ENCODE measurements at regions of chr12 and their contacts with region 1.

Region 1: DNA sequence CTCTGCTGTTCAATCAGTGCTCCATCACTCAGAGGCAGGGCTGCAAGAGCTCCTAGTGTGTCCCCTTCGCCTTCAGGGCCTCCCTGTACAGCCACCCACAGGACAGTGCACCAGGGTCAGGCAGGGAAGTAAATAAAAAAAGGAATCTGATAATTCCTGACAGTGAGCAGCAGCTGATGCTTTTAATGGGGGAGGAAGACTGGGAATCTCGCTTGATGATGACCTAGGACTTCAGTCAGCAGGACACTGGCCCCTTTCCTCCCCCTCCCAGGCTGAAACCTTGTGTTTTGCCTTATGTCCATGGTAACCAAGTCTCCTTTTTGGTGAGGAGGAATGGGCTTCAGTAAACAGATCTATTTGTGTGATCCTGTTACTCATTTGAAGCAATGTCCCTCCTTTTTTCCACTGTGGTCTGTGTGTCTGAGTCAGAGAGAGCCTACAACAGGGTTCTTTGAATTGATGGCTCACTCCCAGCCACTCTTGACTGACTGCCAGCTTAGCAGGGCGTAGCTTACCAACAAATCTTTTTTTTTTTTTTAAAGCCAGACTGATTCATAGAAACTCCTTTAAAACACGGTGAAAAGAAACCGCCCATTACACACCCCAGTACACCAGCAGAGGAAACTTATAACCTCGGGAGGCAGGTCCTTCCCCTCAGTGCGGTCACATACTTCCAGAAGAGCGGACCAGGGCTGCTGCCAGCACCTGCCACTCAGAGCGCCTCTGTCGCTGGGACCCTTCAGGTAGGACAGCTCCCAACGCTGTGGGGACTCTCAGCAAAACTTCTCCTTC is at the start of gene EMP1:
- DNase-seq: peak; percentile 89
- ATAC-seq: peak; percentile 97
- H3K4me3 Mint-ChIP-seq: peak within 1 kb of the TSS; percentile 82
- H3K27ac Mint-ChIP-seq: peak within 1 kb of the TSS; percentile 83
- H3K4me1 Mint-ChIP-seq: peaks cover 32% of the 10 kb centered on the region
- H3K27me3 Mint-ChIP-seq: no peaks in the 10 kb centered on the region
- total RNA-seq, gene EMP1: 12.9 to 16.6 TPM

Region 2: GRCh38 chr12:12356886-12357718 is 839.2 kb before region 1 on chr12 and contains the start of gene BORCS5:
- CTCF ChIA-PET with region 1: no interaction called
- POLR2A ChIA-PET with region 1: no interaction called
- intact Hi-C with region 1: loop called in 1 of 2 experiments (anchors 10 kb)
- DNase-seq: peak; percentile 99
- ATAC-seq: peak; percentile 94
- H3K4me3 Mint-ChIP-seq: peak within 1 kb of the TSS; percentile 98
- H3K27ac Mint-ChIP-seq: peak within 1 kb of the TSS; percentile 99
- H3K4me1 Mint-ChIP-seq: peaks cover 38% of the 10 kb centered on the region
- H3K27me3 Mint-ChIP-seq: no peaks in the 10 kb centered on the region
- total RNA-seq, gene BORCS5: 41.8 to 45.0 TPM

Region 3: GRCh38 chr12:12786716-12787601 is 409.4 kb before region 1 on chr12:
- CTCF ChIA-PET with region 1: no interaction called
- POLR2A ChIA-PET with region 1: no interaction called
- intact Hi-C with region 1: no loop called
- DNase-seq: peak; percentile 84
- ATAC-seq: peak; percentile 89
- H3K4me3 Mint-ChIP-seq: peak overlapping the region; percentile 81
- H3K27ac Mint-ChIP-seq: peak overlapping the region; percentile 90
- H3K4me1 Mint-ChIP-seq: peaks cover 28% of the 10 kb centered on the region
- H3K27me3 Mint-ChIP-seq: no peaks in the 10 kb centered on the region

Region 4: GRCh38 chr12:13044002-13044905 is 152.1 kb before region 1 on chr12 and contains the start of gene FAM234B:
- CTCF ChIA-PET with region 1: interaction called, 3 read pairs
- POLR2A ChIA-PET with region 1: interaction called, 7 read pairs
- intact Hi-C with region 1: loop called in 1 of 2 experiments (anchors 1 kb)
- DNase-seq: peak; percentile 85
- ATAC-seq: peak; percentile 88
- H3K4me3 Mint-ChIP-seq: peak within 1 kb of the TSS; percentile 83
- H3K27ac Mint-ChIP-seq: peak within 1 kb of the TSS; percentile 77
- H3K4me1 Mint-ChIP-seq: peaks cover 27% of the 10 kb centered on the region
- H3K27me3 Mint-ChIP-seq: peaks cover 5% of the 10 kb centered on the region
- total RNA-seq, gene FAM234B: 11.1 to 12.2 TPM

Region 5: DNA sequence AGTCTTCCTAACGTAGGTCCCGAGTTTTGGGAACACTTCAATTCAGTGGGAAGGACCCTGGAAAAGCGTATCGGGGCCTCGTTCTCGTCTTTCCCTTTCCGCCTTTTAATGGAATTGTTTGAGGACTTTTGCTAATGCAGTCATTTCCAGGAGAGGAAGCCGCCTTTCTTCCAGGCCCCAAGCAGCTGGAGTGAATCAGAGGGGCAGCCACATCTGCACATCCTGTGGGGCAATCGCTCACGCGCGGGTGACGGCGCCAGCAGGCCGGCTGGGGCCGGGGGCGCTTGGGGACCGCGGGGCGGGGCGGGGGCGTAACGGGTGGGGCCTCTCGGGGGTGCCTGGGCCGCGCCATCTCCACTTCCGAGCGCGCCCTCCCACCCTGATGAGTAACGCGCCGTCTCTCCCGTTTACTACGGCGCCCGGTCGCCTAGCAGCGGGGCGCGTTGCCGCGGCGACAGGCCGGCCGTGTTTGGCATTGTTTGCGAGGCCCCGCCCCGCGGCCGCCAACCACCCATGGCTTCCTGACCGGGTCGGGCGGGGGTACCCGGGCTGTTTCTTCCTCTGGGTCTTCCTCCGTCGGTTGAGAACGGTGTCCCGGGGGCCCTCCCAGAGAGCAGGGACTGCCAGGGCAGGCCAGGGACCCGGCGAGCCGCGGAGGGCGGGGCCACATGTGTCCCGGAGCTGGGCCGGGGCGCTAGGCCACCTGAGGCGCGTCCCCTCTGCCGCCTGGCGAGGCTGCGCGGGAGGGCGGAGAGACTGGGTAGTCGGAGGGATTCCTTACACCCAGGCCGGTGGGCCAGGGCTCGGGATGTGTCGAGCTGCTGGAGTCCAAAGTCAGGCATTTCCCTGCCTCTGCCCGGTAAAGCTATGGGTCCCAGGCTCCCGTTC is 95.2 kb before region 1 on chr12:
- CTCF ChIA-PET with region 1: interaction called, 14 read pairs
- POLR2A ChIA-PET with region 1: interaction called, 3 read pairs
- intact Hi-C with region 1: loop called (anchors 1 kb)
- DNase-seq: peak; percentile 93
- ATAC-seq: peak; percentile 70
- H3K4me3 Mint-ChIP-seq: peak overlapping the region; percentile 63
- H3K27ac Mint-ChIP-seq: peak overlapping the region; percentile 72
- H3K4me1 Mint-ChIP-seq: peaks cover 58% of the 10 kb centered on the region
- H3K27me3 Mint-ChIP-seq: no peaks in the 10 kb centered on the region

Region 6: DNA sequence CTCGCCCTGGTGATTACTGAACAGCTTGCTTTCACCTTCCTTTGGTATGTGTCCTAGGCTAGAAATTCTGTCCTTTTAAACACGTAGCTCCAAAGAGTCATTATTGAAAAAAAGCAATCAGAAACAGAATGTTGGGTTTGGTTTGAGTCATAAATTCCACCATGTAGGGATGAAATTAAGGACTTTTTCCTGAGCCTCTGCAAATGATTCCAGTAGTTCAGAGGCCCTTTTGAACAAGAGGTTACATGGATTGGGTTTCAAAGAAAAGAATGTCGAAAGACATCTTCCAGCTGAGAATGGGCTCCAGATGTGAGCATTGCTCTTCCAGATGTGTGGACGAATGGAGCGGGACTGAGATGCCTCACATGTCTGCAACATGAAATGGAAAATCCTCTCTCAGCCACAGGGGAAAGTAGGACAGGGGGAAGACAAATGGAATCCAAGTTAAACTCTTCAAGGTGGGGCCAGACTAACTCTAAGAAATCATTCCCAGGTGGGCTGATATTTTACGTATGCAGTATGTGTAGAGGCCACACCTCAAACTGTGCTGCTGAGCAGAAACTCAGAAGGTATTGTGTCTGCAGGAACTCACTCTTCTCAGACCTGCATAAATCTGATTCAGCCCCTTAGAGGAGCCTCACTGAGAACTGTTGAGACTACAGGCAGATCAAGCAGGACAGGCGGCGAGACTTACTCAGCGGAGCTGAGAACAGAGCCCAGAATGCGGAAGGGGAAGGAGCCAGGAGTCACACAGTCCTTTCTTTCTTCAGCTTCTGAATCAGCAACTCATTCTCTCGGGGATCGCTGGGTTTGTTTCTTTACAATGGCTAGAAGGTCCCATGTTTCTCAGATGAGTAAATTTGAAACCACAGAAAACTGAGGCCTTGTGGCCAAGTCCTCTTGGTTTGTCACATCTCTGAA is 23.1 kb before region 1 on chr12:
- CTCF ChIA-PET with region 1: interaction called, 4 read pairs
- POLR2A ChIA-PET with region 1: interaction called, 5 read pairs
- intact Hi-C with region 1: loop called in 1 of 2 experiments (anchors 2 kb)
- DNase-seq: peak; percentile 76
- ATAC-seq: peak; percentile 98
- H3K4me3 Mint-ChIP-seq: no peak overlapping the region
- H3K27ac Mint-ChIP-seq: no peak overlapping the region
- H3K4me1 Mint-ChIP-seq: peaks cover 25% of the 10 kb centered on the region
- H3K27me3 Mint-ChIP-seq: peaks cover 13% of the 10 kb centered on the region

Region 7: DNA sequence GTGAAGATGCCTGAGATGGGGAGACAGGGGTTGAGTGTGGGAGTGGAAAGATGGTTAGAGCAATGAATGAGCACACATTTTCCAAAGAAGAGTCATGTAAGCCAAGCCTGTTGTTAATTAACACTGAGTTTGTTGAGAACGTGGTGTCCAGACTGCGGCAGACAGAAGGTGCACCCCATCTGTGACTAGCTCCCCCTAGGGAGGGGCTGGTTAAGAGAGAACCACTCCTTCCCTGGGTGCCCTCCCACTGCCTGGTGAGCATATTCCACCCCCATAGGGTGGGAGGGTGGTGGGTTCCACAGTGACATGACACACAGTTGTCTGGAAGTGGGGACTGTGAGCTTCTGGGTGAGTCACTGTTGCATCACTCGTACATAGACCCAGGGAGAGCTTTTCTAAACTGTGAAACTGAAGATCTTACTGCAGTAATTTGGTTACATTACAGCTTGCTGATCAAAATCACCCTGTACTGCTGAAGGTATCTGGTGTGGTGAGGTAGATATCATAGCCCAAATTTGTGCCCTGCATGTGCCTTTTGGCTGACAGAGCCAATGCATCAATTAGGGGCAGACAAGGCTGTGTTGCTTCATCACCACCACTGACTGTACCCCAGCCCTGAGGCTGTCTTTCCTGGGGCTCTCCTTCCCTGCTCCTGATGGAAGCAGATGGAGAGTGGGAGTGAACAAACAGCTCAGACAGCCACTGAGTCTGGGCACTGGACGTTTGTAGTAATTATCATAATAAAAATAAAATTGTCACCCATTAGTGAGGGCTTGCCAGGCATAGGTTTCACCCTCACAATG is 151.1 kb after region 1 on chr12:
- CTCF ChIA-PET with region 1: interaction called, 3 read pairs
- POLR2A ChIA-PET with region 1: no interaction called
- intact Hi-C with region 1: loop called in 1 of 2 experiments (anchors 1 kb)
- DNase-seq: peak; percentile 82
- ATAC-seq: peak; percentile 92
- H3K4me3 Mint-ChIP-seq: no peak overlapping the region
- H3K27ac Mint-ChIP-seq: peak overlapping the region; percentile 21
- H3K4me1 Mint-ChIP-seq: peaks cover 23% of the 10 kb centered on the region
- H3K27me3 Mint-ChIP-seq: peaks cover 45% of the 10 kb centered on the region

Measured in activated CD4-positive, alpha-beta T cell treated with anti-CD3 and anti-CD28 coated beads for 36 hours (primary cell).